A549 (cell line): ENCODE measurements at regions of chr2 and their contacts with region 1.

Region 1: GRCh38 chr2:234881413-234882241 is 70.2 kb upstream of the SH3BP4 start:
- DNase-seq: peak; percentile 94 to 95
- ATAC-seq: peak; percentile 94 to 99
- H3K4me3 ChIP-seq: no peak overlapping the region
- H3K27ac ChIP-seq: peak overlapping the region; percentile 88 to 92
- H3K4me1 ChIP-seq: peaks cover 34% of the 10 kb centered on the region
- CTCF ChIP-seq: peak; percentile 72
- EP300 ChIP-seq: no peak
- POLR2A ChIP-seq: no peak
- RAD21 ChIP-seq: peak; percentile 58 to 65

Region 2: GRCh38 chr2:234533626-234534025 is 348.0 kb before region 1 on chr2:
- CTCF ChIA-PET with region 1: no interaction called
- POLR2A ChIA-PET with region 1: no interaction called
- DNase-seq: no peak
- ATAC-seq: no peak
- H3K4me3 ChIP-seq: no peak overlapping the region
- H3K27ac ChIP-seq: no peak overlapping the region
- H3K4me1 ChIP-seq: no peaks in the 10 kb centered on the region
- CTCF ChIP-seq: no peak
- EP300 ChIP-seq: no peak
- POLR2A ChIP-seq: no peak
- RAD21 ChIP-seq: no peak

Region 3: GRCh38 chr2:234679741-234680687 is 201.6 kb before region 1 on chr2:
- CTCF ChIA-PET with region 1: interaction called, 5 read pairs
- POLR2A ChIA-PET with region 1: interaction called, 18 read pairs
- DNase-seq: peak; percentile 67 to 91
- ATAC-seq: peak; percentile 93 to 95
- H3K4me3 ChIP-seq: no peak overlapping the region
- H3K27ac ChIP-seq: peak overlapping the region; percentile 94 to 97
- H3K4me1 ChIP-seq: peaks cover 79% of the 10 kb centered on the region
- CTCF ChIP-seq: no peak
- EP300 ChIP-seq: peak; percentile 95 to 96; a peak in 3 of 5 replicates
- POLR2A ChIP-seq: no peak
- RAD21 ChIP-seq: peak; percentile 38 to 69

Region 4: DNA sequence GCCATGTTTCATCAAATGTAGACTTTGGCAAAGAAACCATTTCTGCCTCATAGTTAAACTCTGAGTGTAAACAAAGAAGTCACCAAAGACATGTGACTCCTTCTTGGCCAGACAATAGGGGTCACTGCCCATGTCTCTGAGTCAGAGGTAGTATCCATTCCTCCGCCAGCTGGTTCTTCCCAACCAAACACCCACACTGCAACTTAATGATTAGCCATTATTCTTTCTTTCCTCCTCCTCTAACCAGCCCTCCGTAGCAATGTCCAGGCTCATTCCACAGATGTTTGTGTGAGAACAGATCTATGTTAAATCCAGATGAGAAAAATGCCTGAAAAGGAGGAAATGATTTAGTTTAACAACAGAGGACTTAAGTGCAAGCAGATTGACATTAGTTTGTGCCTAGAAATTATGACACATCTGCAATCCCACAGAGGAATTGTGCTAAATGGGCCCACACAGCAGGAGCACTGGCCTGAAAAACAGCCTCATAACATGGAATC is 57.7 kb before region 1 on chr2:
- CTCF ChIA-PET with region 1: no interaction called
- POLR2A ChIA-PET with region 1: interaction called, 10 read pairs
- DNase-seq: peak; percentile 87
- ATAC-seq: peak; percentile 90 to 95
- H3K4me3 ChIP-seq: no peak overlapping the region
- H3K27ac ChIP-seq: peak overlapping the region; percentile 81 to 88
- H3K4me1 ChIP-seq: peaks cover 28% of the 10 kb centered on the region
- CTCF ChIP-seq: no peak
- EP300 ChIP-seq: peak; percentile 78 to 84; a peak in 4 of 5 replicates
- POLR2A ChIP-seq: no peak
- RAD21 ChIP-seq: peak in 1 of 2 experiments; percentile 67; a peak in 4 of 5 replicates

Region 5: GRCh38 chr2:234840336-234840735 is 41.3 kb before region 1 on chr2:
- CTCF ChIA-PET with region 1: interaction called, 28 read pairs
- POLR2A ChIA-PET with region 1: interaction called, 5 read pairs
- DNase-seq: peak; percentile 53 to 87
- ATAC-seq: peak; percentile 91 to 92
- H3K4me3 ChIP-seq: no peak overlapping the region
- H3K27ac ChIP-seq: peak overlapping the region; percentile 78 to 89
- H3K4me1 ChIP-seq: peaks cover 60% of the 10 kb centered on the region
- CTCF ChIP-seq: no peak
- EP300 ChIP-seq: peak; percentile 67 to 77; a peak in 2 of 5 replicates
- POLR2A ChIP-seq: no peak
- RAD21 ChIP-seq: peak; percentile 43 to 52

Region 6: GRCh38 chr2:234981197-234982117 is 99.8 kb after region 1 on chr2:
- CTCF ChIA-PET with region 1: interaction called, 20 read pairs
- POLR2A ChIA-PET with region 1: interaction called, 14 read pairs
- DNase-seq: peak; percentile 91 to 94
- ATAC-seq: peak; percentile 96
- H3K4me3 ChIP-seq: peak overlapping the region; percentile 34
- H3K27ac ChIP-seq: peak overlapping the region; percentile 86 to 96
- H3K4me1 ChIP-seq: peaks cover 55% of the 10 kb centered on the region
- CTCF ChIP-seq: no peak; the same call in 2 of the 3 replicates
- EP300 ChIP-seq: peak; percentile 83 to 93; a peak in 4 of 5 replicates
- POLR2A ChIP-seq: peak; percentile 22; the same call in 1 of the 2 replicates
- RAD21 ChIP-seq: peak; percentile 49 to 72

Region 7: DNA sequence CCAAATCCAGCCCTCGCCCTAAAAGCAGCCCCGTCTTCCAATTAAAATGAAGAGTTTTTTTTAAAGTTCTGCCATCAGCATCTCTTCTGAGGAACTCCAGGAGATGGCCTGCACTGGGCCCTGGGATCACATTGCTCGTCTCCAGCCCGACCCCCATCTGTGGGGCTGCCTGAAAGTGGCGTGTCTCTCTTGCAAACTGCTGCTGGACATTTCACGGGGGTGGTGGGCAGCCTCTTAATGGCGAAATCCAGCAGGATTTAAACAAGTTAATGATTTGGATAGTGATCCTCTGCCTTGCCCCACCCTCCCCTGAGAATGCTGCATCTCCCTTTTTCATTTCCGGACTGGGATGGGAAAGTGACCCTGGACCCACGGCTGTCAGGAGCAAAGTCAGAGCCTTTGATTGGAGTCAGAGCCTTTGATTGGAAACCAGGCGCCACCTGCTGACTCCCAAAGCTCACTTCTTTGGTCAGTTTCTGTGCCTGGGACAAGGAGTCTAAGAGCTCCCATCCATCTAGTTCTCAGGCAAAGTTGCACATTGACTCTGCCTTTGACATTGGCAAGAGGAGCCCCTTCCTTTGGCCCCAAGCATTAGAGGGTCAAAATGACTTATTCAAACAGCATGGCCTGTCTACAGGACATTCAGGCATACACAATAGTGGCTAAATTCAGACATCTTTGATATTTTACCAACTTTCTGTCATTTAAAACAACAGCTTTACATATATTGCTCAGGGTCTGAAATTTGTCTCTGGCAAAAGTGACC is 225.4 kb after region 1 on chr2:
- CTCF ChIA-PET with region 1: interaction called, 17 read pairs
- POLR2A ChIA-PET with region 1: interaction called, 4 read pairs
- DNase-seq: peak; percentile 81 to 82
- ATAC-seq: peak; percentile 96 to 98
- H3K4me3 ChIP-seq: no peak overlapping the region
- H3K27ac ChIP-seq: peak overlapping the region; percentile 16 to 89; a peak in 5 of 6 replicates
- H3K4me1 ChIP-seq: peaks cover 4% of the 10 kb centered on the region; the same call in 2 of the 3 replicates
- CTCF ChIP-seq: peak; percentile 89
- EP300 ChIP-seq: no peak
- POLR2A ChIP-seq: no peak
- RAD21 ChIP-seq: peak; percentile 95 to 97